Lower lobe of right lung (tissue), 2 donors: ENCODE measurements at regions of chr9 and their contacts with region 1.

Region 1: GRCh38 chr9:76576344-76576743 is 117.4 kb downstream of the GCNT1 start:
- DNase-seq: peak; percentile 57
- ATAC-seq: peak; percentile 75 to 81
- H3K4me3 ChIP-seq: no peak overlapping the region
- H3K27ac ChIP-seq: peak overlapping the region; percentile 33
- H3K4me1 ChIP-seq: peaks cover 14% of the 10 kb centered on the region
- H3K27me3 ChIP-seq: no peaks in the 10 kb centered on the region
- CTCF ChIP-seq: no peak

Region 2: DNA sequence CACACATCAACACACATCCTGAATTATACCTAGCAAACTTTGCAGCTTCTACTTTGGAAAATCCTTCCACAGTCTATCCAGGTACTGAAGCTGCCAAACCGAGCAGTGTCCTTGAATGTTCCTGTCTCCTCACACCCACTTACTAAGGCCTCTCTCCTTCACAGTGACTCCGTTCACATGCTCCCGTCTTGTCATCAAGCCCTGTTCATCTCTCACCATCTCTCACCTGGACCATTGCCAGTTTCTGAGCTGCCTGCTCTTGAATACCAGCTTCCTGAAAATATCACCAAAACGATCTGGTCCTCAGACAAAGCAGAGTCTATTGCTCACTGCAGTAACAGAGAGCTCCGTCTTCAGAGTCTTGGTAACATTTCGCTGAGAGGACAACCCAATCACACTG is 60.0 kb before region 1 on chr9:
- intact Hi-C with region 1: loop called (anchors 10 kb)
- DNase-seq: no peak
- ATAC-seq: no peak
- H3K4me3 ChIP-seq: no peak overlapping the region
- H3K27ac ChIP-seq: no peak overlapping the region
- H3K4me1 ChIP-seq: no peaks in the 10 kb centered on the region
- H3K27me3 ChIP-seq: no peaks in the 10 kb centered on the region
- CTCF ChIP-seq: no peak